Psoas muscle (tissue), 8 donors: ENCODE measurements at regions of chr4 and their contacts with region 1.

Region 1: DNA sequence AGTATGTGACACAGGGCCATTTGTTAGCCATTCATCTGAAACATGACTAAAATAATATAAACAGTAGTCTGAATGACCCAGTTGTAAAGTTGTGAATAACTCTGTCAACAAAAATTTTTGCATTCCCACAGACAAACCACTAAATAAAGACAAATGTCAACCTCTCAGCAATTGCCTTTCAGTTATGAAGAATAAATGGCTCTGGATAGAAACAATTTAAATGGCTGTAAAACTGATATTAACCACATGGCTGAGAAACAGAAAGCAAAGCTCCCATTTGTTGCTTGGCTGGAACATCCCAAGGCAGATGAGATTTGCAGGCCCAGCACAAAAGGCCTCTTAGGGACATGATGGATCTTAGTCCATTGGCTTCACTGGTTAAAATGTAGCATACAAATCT is 296.3 kb downstream of the GALNTL6 start:
- DNase-seq: no peak
- ATAC-seq: no peak
- H3K4me3 ChIP-seq: no peak overlapping the region
- H3K27ac ChIP-seq: no peak overlapping the region
- H3K4me1 ChIP-seq: no peaks in the 10 kb centered on the region
- H3K27me3 ChIP-seq: no peaks in the 10 kb centered on the region
- CTCF ChIP-seq: no peak

Region 2: GRCh38 chr4:172061204-172061603 is 48.3 kb before region 1 on chr4:
- intact Hi-C with region 1: loop called in 1 of 2 experiments (anchors 2 kb)
- DNase-seq: no peak
- ATAC-seq: no peak
- H3K4me3 ChIP-seq: no peak overlapping the region
- H3K27ac ChIP-seq: no peak overlapping the region
- H3K4me1 ChIP-seq: no peaks in the 10 kb centered on the region
- H3K27me3 ChIP-seq: no peaks in the 10 kb centered on the region
- CTCF ChIP-seq: no peak

Region 3: GRCh38 chr4:172390341-172390740 is 280.9 kb after region 1 on chr4:
- intact Hi-C with region 1: no loop called
- DNase-seq: no peak
- ATAC-seq: no peak
- H3K4me3 ChIP-seq: no peak overlapping the region
- H3K27ac ChIP-seq: no peak overlapping the region
- H3K4me1 ChIP-seq: no peaks in the 10 kb centered on the region
- H3K27me3 ChIP-seq: no peaks in the 10 kb centered on the region
- CTCF ChIP-seq: no peak